OCI-LY7 (cell line): ENCODE measurements at regions of chr2 and their contacts with region 1.

Region 1: DNA sequence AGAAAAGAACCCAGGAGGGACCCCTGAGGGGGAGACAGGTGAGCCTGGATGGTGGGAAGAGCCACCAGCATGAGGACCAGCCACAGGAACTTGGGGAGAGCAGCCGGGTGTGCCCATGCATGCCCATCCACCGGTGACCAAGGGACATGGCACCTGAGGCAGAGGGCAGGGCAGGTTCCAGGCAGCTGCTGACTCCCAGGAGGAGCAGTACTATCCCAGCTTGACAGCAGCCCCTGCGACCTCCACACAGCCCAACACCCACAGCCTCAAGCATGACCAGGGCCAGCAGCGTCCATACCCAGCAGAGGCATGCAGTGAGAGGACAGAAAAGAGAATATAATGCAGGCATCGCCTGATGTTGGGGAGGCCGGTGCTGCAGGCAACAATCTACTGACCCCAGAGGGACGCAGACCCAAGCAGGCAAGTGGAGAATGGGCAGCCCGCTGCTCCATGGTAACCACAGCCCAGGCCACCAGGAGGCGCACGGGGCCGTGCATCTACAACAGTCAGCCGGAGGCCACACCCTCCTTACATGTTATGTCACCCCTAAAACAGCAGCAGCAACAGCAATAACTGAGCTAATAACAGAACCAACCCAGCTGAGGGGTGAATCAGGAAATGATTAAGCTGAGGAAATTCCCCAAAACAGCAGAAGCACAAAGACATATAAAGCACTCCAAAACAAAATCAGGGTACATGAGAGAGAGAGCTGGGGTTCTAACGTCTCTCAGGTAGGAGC is 44.1 kb downstream of the ANKMY1 start:
- DNase-seq: peak; percentile 79
- H3K4me3 ChIP-seq: no peak overlapping the region
- H3K27ac ChIP-seq: no peak overlapping the region
- H3K4me1 ChIP-seq: peaks cover 4% of the 10 kb centered on the region
- CTCF ChIP-seq: peak; percentile 93

Region 2: GRCh38 chr2:239181907-239182581 is 1331.7 kb before region 1 on chr2:
- CTCF ChIA-PET with region 1: no interaction called
- POLR2A ChIA-PET with region 1: no interaction called
- intact Hi-C with region 1: no loop called
- DNase-seq: no peak
- H3K4me3 ChIP-seq: no peak overlapping the region
- H3K27ac ChIP-seq: no peak overlapping the region
- H3K4me1 ChIP-seq: no peaks in the 10 kb centered on the region
- CTCF ChIP-seq: no peak

Region 3: GRCh38 chr2:240560480-240561326 is 47.0 kb after region 1 on chr2:
- CTCF ChIA-PET with region 1: interaction called, 16 read pairs
- POLR2A ChIA-PET with region 1: no interaction called
- intact Hi-C with region 1: loop called (anchors 1 kb)
- DNase-seq: peak; percentile 98
- H3K4me3 ChIP-seq: peak overlapping the region; percentile 91
- H3K27ac ChIP-seq: peak overlapping the region; percentile 86
- H3K4me1 ChIP-seq: peaks cover 60% of the 10 kb centered on the region
- CTCF ChIP-seq: no peak

Region 4: GRCh38 chr2:240566203-240567136 is 52.8 kb after region 1 on chr2:
- CTCF ChIA-PET with region 1: interaction called, 16 read pairs
- POLR2A ChIA-PET with region 1: no interaction called
- intact Hi-C with region 1: loop called (anchors 1 kb)
- DNase-seq: peak; percentile 90
- H3K4me3 ChIP-seq: peak overlapping the region; percentile 72
- H3K27ac ChIP-seq: peak overlapping the region; percentile 84
- H3K4me1 ChIP-seq: peaks cover 63% of the 10 kb centered on the region
- CTCF ChIP-seq: peak; percentile 80

Region 5: GRCh38 chr2:240611601-240612210 is 98.0 kb after region 1 on chr2:
- CTCF ChIA-PET with region 1: no interaction called
- POLR2A ChIA-PET with region 1: no interaction called
- intact Hi-C with region 1: no loop called
- DNase-seq: no peak
- H3K4me3 ChIP-seq: no peak overlapping the region
- H3K27ac ChIP-seq: no peak overlapping the region
- H3K4me1 ChIP-seq: no peaks in the 10 kb centered on the region
- CTCF ChIP-seq: no peak